ENCODE measurements at regions of chr11 and their contacts with region 1.

Region 1: DNA sequence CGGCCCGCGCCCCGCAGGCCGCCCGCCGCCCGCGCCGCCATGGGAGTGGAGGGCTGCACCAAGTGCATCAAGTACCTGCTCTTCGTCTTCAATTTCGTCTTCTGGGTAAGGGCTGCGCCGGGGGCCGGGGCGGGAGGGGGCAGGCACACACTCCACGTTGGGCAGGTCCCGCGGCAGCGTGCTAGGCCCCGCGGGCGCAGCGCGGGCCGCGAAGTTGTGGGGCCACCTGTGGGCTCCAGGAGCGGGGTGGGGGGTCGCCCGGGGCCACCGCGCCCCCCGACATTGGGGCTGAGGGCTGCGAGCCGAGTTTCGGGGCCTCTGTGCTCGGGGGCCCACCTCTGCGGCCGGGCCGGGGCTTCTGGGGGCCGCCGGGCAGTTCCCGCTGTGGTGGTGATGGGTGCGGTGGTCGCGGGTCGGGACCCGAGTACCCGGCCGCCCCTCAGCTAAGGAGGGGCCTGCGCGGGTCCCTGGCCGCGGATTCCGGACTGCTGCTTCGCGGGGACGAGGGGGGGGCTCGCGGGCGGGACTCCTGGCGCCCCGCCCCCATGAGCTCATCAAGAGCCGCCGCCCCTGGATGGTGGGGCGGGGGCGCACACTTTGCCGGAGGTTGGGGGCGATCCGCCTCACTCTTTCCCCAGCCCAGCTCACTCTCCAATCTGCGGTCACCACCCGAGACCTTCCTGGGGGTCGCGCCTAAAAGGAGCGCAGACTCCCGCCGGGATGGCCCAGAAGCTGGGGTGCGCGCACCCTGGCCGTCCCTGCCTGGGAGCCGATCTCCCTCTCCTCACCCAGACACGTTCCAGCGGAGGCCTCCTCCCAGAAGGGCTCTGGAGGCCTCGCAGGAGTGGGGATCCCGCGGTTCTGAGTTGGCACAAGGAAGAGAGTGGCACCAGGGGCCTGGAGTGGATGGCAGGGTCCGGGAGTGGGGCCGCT is 667 bp downstream of the CD81 start:
- H3K4me3 ChIP-seq: peak overlapping the region; percentile 86
- H3K27ac ChIP-seq: peak overlapping the region; percentile 83; the same call in 1 of the 2 replicates
- H3K4me1 ChIP-seq: no peaks in the 10 kb centered on the region
- CTCF ChIP-seq: no peak

Region 2: DNA sequence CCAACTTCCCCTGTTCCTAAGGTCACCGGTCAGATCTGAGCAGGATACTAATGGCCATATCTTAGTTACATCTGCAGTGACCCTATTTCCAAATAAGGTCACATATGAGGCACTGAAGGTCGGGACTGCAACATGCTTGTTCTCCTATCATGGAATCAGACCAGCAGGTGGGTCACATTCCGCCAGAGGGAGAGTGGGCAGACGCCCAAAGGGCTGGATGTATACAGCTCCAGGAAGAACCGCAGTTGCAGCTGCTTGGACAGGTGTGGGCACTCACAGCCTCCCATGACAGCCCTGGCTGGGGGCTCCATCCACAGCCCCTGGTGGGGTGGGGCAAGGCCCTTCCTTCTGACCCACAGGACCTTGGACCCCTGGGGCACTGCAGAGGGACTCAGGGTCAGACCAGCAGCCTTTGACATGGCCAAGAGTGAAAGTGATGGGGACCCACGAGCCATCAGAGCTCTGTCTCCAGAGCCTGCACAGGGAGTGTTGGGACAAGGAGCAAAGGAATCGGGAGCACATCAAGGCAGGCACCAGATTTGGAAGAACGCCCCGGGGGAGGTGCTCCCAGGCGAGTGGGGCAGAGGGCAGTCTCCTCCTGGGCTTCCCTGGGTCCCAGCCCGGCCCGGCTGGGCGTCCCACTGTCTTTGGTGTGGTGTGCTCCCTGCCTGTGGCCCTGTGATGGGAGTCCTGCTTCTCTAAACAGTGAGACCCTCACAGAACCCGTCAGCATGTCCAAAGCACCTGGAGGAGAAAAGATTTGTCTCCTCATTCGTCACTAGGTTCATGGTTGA is 14.0 kb before region 1 on chr11:
- CTCF ChIA-PET with region 1: no interaction called
- POLR2A ChIA-PET with region 1: interaction called, 16 read pairs
- H3K4me3 ChIP-seq: no peak overlapping the region
- H3K27ac ChIP-seq: no peak overlapping the region
- H3K4me1 ChIP-seq: no peaks in the 10 kb centered on the region
- CTCF ChIP-seq: no peak

Region 3: GRCh38 chr11:2390725-2391151 is 13.0 kb after region 1 on chr11:
- CTCF ChIA-PET with region 1: interaction called, 5 read pairs
- POLR2A ChIA-PET with region 1: interaction called, 18 read pairs
- H3K4me3 ChIP-seq: no peak overlapping the region
- H3K27ac ChIP-seq: no peak overlapping the region
- H3K4me1 ChIP-seq: no peaks in the 10 kb centered on the region
- CTCF ChIP-seq: no peak

Region 4: GRCh38 chr11:2666401-2666741 is 288.6 kb after region 1 on chr11:
- CTCF ChIA-PET with region 1: no interaction called
- POLR2A ChIA-PET with region 1: no interaction called
- H3K4me3 ChIP-seq: no peak overlapping the region
- H3K27ac ChIP-seq: no peak overlapping the region
- H3K4me1 ChIP-seq: no peaks in the 10 kb centered on the region
- CTCF ChIP-seq: no peak